ENCODE measurements at regions of chr2 and their contacts with region 1.

Region 1: DNA sequence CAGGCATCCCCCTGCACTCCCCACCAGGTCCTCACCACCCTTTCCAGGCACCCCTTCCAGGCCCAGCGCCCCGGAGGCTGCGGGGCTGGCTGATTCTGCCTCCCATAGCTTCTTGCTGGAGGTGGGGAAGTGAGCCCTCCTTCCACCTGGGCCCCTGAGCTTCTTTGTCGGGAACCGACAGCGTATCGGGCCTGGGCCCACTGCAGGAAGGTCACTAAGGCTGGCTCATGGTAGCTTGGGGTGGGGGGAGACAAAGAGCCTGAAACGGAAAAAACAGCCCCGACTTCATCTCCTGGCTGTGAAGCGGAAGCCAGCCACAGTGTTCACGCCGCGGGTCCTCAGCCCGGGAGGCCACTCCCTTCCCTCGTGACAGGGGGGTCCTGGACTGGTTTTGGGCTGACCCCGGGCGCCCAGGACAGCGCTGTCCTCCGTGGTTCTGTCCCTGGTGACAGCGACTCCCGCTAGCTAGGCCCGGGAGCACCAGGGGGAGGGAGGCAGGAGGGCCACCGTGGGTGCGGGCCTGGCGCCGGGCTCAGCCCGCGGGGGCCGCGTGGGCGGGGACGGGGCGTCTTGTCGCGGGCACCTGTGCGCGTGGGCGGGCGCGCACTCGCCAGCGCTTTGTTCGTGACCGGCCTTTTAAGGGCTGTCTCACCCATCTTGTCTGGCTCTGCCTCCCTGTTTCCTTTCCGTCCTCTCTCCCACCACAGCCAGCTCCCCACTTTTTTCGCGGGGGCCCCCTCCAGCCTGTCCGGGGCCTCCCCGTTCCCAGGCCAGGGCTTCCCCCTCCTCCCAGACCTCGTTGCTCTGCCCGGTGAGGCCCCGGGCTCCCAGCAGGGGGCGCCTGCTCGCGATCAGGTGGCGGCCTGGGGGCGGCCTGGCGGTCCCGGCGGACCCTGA is 64.9 kb downstream of the DNMT3A start:
- DNase-seq: peak; percentile 84
- ATAC-seq: peak; percentile 79
- H3K4me3 Mint-ChIP-seq: peak overlapping the region; percentile 65
- H3K27ac Mint-ChIP-seq: peak overlapping the region; percentile 92
- H3K4me1 Mint-ChIP-seq: peaks cover 70% of the 10 kb centered on the region
- H3K27me3 Mint-ChIP-seq: no peaks in the 10 kb centered on the region

Region 2: GRCh38 chr2:25265802-25266201 is 11.0 kb before region 1 on chr2:
- CTCF ChIA-PET with region 1: interaction called, 27 read pairs
- DNase-seq: no peak
- ATAC-seq: peak; percentile 30
- H3K4me3 Mint-ChIP-seq: no peak overlapping the region
- H3K27ac Mint-ChIP-seq: no peak overlapping the region
- H3K4me1 Mint-ChIP-seq: peaks cover 10% of the 10 kb centered on the region
- H3K27me3 Mint-ChIP-seq: no peaks in the 10 kb centered on the region

Region 3: DNA sequence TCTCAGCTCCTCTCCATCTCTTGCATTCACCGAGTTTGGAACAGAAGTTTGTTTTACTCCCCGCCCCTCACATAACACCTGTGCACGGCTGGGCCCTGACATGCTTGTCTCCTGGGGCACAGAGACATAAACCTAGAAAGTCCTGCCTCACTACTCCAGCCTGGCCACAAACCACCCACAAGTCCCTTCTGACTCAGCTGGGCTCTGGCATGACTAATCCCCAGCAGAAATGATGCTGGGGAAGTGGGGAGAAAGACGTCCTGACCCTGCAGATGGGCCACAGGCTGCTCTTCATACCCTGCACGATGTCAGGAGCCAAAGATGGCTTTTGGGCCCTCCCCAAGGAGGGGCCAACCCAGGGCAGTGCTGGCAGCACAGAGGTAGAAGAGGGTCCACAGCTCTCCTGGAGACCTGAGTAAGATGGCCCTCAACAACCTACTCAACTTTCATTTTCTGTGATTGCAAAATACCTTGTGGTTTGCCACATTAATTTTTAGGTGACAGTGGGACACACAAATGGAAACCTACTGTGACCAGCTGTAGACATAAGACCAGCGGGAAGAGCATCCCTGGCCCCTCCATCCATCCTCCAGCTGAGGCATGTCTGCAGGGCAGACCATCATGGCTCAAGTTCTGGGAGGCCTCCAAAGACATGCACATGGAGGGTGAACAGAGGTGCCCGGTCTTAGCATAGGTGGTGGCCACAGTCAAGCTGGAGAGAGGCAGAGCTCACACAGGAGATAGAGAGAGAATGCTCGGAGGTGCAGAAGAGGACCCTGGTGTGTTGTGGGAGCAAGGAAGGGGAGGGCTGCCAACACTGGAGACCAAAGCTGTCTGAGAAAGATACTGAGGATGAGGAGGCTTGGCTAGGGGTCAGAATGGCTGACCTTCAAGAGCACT is 24.9 kb after region 1 on chr2:
- CTCF ChIA-PET with region 1: interaction called, 26 read pairs
- DNase-seq: peak; percentile 96
- ATAC-seq: peak; percentile 95
- H3K4me3 Mint-ChIP-seq: peak overlapping the region; percentile 10
- H3K27ac Mint-ChIP-seq: peak overlapping the region; percentile 70
- H3K4me1 Mint-ChIP-seq: peaks cover 63% of the 10 kb centered on the region
- H3K27me3 Mint-ChIP-seq: no peaks in the 10 kb centered on the region

Region 4: DNA sequence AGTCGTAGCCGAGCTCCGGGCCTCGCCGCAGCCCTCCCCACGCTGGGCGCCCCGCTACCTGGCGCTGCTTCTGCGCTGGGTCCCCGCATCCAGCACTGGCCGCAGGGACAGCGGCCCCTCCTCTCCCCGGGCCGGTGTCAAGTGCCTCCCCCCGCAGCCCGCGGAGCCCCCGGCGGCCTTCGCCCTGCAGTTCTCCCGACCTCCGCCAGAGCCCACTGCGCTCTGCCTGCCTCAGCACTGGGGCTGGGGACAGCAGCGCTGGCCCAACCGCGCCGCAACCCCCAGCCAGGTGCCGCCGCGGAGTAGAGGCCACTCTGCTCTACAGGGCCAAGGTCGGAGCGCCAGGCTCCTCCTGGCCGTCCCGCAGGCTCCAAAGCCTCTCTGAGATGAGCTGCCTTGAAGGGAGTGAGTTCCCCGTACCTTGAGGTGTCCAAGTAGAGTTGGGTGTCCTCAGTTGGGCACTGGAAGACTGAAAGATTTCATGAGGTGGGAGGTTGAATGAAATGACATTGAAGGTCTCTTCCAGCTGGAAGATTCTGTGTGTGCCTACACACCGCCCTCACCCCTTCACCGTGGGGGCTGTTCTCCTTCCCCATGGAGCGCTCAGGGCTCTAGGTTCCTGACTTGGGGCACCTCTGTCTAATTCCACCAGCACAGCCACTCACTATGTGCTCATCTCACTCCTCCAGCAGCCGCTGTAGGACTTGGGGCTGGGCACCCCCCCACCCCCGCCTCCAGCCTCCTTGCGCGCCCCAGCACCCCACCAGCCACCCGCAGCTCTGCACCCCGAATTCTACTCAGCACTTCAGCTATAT is 65.8 kb after region 1 on chr2:
- CTCF ChIA-PET with region 1: interaction called, 11 read pairs
- DNase-seq: peak; percentile 89
- ATAC-seq: peak; percentile 91
- H3K4me3 Mint-ChIP-seq: peak overlapping the region; percentile 71
- H3K27ac Mint-ChIP-seq: peak overlapping the region; percentile 69
- H3K4me1 Mint-ChIP-seq: peaks cover 30% of the 10 kb centered on the region
- H3K27me3 Mint-ChIP-seq: no peaks in the 10 kb centered on the region